ENCODE measurements at regions of chr5 and their contacts with region 1.

Region 1: DNA sequence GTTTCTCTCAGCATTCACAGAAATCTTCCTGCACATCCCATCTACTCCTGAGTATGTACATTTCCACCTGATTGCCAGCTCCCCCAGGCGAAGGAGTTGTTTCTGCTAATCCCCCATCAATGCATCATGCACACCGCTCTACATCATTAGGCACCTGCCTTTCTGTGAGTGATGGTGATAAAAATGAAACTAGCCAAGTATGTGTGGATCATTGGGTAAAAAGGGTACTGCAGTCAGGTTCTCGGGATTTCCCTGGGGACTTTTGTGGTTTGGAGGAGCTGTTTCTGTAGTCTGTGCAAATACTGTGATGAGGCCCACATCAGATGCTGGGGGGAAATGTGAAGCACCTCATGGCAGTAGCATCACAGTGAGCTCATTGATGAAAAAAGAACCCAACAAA is 30.4 kb downstream of the CAMK4 start:
- DNase-seq: peak; percentile 58
- CTCF ChIP-seq: no peak

Region 2: GRCh38 chr5:110738812-110739651 is 515.6 kb before region 1 on chr5 and contains the start of gene SLC25A46:
- in situ Hi-C with region 1: loop called (anchors 25 kb)
- DNase-seq: peak; percentile 81
- CTCF ChIP-seq: no peak

Region 3: DNA sequence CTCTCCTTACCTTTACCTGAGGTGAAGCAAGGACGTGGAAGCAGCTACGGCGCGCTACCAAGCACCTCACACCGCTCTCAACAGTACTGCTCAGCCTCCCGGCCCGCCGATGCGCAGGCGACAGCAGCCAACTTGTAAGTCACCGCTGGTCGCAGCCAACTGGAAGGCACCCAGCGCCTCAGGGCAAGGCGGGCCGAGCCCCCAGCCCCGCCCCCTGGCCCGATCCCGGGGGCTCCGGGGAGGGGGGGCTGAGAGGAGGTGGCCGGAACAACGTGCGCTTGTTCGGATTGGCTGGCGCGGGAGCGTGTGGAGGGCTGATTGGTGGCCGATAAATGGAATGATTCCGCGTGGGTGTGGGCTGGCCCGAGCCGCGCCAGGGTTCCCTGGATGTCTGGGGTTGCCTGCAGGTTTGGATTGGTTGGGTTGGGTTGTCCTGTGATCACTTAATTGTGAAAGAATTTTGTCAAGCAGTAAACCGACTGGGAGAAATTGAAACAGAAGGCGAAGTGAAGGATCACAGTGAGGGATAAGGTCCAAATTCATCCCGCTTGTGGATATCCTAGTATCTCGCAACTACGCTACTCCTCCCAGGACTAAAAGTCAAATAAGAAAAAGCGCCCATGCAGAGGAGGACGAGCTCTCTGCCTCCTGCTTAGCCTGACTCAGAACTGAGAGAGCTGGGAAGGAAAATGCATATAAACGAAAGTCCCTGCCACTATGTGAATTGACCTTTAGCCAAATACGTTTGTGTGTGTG is 257.9 kb after region 1 on chr5 and contains the start of gene STARD4:
- in situ Hi-C with region 1: no loop called
- DNase-seq: peak; percentile 93
- CTCF ChIP-seq: no peak

Region 4: DNA sequence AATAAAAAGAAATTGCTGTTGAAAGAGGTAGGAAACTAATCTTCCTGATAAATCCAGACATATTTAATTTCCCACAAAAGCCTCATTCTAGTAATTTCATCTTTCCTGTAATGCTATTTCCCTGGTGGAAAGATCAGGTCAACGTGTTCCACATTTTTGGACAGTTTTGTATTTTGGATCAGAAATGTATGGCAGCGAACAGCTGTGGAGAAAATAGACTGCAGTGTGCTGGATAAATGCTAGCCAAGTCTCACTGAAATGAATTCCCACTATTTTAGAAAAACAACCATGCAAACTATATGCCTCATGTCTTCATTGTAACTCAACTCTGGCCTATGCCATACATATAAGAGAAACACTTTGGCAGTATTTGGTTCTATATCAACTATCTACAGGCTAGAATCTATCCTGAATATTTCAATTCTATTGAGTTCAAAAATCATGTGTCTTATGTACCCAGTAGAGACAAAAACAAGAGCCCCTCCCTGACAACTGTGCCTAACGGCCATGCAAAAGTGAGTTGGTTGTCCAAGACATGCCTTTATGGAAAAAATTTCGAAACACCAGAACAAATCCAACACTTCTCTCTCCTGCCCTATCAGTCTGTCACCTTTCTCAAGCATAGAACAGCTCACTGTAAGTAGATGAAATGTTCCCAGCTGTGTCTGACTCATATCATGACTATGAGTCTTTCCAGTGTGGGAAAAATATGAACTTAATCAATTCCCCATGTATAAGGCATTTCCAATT is 693.7 kb after region 1 on chr5:
- in situ Hi-C with region 1: no loop called
- DNase-seq: no peak
- CTCF ChIP-seq: no peak

Measured in GM13977 (cell line).